Heart left ventricle (tissue), 16 donors: ENCODE measurements at regions of chr22 and their contacts with region 1.

Region 1: DNA sequence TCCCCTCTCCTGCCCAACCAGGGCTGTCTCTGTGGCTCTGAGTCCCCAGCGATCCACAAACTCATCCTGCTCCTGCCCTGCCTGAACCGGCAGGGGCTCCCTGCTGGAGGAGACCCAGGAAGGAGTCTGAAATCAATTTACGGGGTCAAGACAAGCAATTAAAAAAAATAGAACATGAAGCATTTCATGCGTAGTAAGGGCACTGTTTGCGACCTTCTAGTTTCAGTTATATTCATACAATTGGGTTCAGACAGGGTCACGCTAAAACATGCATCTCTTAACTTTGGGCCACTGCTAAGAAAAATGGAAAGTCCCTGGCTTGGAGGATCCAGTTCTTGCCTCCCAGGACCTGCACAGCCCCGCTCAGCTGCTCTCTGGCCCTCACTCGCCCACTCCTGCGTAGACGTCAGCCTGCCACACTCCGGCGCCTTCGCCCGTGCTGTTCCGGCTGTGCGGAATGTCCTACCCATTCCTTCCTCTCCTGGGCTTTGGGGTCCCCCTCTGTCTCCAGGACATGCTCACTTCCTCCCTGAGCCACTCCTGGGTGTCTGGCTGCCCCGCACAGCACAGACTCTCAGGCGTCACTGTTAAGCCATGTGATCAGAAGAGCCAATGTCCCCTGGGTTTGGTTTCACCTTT is 12.8 kb downstream of the NFAM1 start:
- DNase-seq: no peak
- ATAC-seq: peak in 2 of 4 donors; percentile 51 to 70
- H3K4me3 ChIP-seq: peak overlapping the region in 2 of 12 donors; percentile 13 to 18
- H3K27ac ChIP-seq: peak overlapping the region in 1 of 12 donors; percentile 49
- H3K4me1 ChIP-seq: peaks cover 0 to 18% (median 0%) of the 10 kb centered on the region in 12 donors
- H3K27me3 ChIP-seq: peaks cover 0 to 8% (median 0%) of the 10 kb centered on the region in 9 donors
- CTCF ChIP-seq: no peak
- POLR2A ChIP-seq: no peak

Region 2: GRCh38 chr22:41256254-41256897 is 1163.0 kb before region 1 on chr22:
- intact Hi-C with region 1: no loop called
- DNase-seq: no peak
- ATAC-seq: no peak
- H3K4me3 ChIP-seq: no peak overlapping the region
- H3K27ac ChIP-seq: peak overlapping the region in 1 of 12 donors; percentile 10
- H3K4me1 ChIP-seq: peaks cover 0 to 12% (median 2%) of the 10 kb centered on the region in 12 donors
- H3K27me3 ChIP-seq: no peaks in the 10 kb centered on the region
- CTCF ChIP-seq: no peak
- POLR2A ChIP-seq: no peak

Region 3: DNA sequence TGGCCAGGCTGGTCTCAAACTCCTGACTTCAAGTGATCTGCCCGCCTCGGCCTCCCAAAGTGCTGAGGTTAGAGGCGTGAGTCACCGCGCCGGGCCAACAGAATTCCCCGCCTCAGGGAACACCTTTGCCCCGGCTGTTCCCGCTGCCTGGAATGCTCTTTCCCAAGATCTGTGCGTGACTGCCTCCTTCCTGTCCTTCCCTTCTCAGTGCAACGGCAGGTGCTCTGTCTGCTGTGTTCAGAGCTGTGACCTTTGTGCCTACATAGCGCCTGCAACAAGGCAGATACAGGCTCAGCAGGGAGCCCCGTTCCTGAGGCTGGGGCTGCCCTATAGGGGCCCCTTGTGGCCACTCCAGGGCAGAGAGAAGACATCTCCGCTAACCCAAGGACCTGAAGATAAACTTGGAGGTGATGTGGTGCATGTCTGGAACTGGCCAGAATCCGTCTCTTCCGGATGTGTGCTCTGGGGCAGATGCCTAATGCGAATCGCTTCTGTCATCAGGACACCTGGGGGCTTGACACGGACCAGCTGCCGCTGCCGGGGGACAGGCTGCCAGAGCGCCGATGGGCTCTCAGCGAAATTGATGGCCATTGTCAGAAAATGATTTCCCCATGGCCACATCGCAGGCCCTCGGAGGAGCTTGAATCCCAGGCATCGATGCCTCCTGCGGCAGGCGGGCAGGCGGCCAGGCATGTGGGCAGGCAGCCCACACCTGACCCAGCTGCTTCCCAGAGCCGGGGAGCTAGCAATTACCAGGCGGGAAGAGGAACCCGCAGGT is 105.4 kb before region 1 on chr22:
- intact Hi-C with region 1: loop called in 1 of 10 experiments (anchors 10 kb)
- DNase-seq: peak in 2 of 5 donors; percentile 50 to 56
- ATAC-seq: peak in 3 of 4 donors; percentile 31 to 66 (median 65)
- H3K4me3 ChIP-seq: no peak overlapping the region
- H3K27ac ChIP-seq: no peak overlapping the region
- H3K4me1 ChIP-seq: peaks cover 0 to 16% (median 4%) of the 10 kb centered on the region in 12 donors
- H3K27me3 ChIP-seq: peaks cover 0 to 11% (median 0%) of the 10 kb centered on the region in 9 donors
- CTCF ChIP-seq: peak in 10 of 12 donors; percentile 5 to 45 (median 26)
- POLR2A ChIP-seq: no peak

Region 4: DNA sequence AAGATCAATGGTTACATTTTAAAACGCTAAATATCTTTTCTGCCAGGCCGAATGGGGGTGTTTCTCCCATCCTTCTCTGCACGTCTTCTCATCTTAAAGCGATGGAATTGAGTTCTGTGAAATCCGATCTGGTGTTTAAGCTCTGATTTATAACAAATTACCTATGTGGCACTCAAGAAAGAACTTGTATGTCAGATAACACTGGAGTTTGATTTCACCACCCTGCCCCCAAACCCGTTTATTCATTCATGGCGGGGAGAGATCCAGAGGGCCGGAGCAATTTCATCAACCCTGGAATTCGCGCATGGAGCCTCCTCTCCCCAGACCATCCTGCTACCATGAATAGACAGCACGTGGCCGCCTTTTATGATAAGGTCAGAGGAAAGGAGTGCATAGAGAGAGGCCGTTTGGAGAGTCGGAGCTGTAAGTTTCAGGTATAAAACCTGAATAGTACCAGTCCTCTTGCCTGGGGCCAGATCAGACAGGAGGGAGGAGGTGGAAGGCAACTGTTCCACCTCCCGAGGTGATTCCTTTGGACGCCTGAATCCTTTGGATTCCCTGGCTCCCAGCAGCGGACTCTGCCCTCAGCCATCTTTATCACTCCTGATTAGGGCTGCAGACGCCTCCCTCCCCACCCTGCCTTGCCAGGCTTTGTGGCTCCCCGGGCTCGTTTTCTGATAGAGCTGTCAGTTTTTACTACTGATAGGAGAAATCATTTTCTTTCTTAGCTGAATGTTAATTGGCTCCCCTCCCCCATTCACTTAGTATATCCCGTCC is 40.1 kb after region 1 on chr22:
- intact Hi-C with region 1: loop called in 1 of 10 experiments (anchors 1 kb)
- DNase-seq: no peak
- ATAC-seq: no peak
- H3K4me3 ChIP-seq: no peak overlapping the region
- H3K27ac ChIP-seq: no peak overlapping the region
- H3K4me1 ChIP-seq: peaks cover 0 to 8% (median 0%) of the 10 kb centered on the region in 12 donors
- H3K27me3 ChIP-seq: peaks cover 0 to 56% (median 15%) of the 10 kb centered on the region in 9 donors
- CTCF ChIP-seq: no peak
- POLR2A ChIP-seq: no peak